ENCODE measurements at regions of chr4 and their contacts with region 1.

Region 1: DNA sequence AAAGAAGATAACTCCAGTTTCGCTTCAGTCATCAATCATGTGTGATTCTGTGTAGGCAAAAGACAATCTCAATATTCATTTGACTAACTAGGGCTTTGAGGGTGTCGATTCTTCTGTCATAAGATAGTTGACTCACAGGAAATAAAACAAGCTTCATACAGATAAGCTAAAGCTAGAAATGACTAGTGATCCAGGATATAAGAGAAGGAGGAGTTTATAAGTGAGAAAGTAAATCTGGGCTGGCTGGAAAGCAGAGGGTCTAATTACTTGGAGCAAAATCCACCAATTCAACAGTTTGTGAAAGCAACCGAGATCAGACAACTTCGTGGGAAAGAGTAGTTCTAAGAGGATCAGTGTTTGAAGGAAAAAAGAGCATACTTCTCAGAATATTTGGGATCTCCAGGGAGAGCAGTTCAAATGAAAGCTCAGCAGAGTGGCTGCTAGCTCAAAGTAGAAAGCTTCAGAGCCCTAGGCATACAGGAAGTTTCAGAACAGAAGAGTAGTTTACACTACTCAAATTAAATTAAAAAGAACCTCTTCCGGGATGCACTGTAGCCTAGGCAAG is 429.3 kb downstream of the INPP4B start:
- DNase-seq: no peak
- ATAC-seq: peak; percentile 92
- H3K4me3 Mint-ChIP-seq: peak overlapping the region; percentile 57
- H3K27ac Mint-ChIP-seq: peak overlapping the region; percentile 98
- H3K4me1 Mint-ChIP-seq: peaks cover 81% of the 10 kb centered on the region
- H3K27me3 Mint-ChIP-seq: no peaks in the 10 kb centered on the region

Region 2: DNA sequence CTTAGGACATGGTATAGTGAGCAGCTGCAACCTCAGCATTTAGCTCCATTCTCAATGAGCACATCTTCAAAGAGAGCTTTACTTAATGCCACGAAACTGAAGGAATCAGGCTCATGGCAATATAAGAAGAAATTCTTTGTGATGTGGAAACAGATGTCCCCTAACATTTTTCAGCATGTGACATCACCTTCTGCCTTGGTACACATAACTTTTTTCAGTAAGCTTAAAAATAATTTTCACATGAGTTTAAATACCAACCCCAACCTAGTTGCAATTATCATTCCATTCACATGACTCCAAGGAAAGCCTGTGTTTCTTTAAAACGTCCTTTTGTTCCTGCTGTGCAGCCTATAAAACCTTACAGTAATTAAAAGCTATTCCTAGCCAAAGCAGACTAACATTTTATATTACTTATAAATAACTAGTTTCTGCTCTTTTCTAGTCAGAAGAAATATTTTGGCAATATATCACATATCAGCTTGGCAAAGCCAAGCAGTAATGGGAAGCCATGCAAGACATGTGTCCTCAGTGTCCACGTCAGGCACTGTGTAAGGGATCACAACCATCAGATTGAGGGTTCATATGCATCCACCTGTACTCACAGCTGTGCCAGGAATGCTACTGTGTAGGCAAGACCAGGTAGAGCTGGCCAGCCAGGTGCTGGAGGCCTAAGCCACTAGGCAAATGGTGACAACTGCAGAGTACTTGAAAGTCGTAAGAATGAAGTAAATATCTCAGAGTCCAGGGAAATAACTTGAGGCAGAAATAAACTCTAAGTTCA is 37.3 kb before region 1 on chr4:
- CTCF ChIA-PET with region 1: interaction called, 4 read pairs
- POLR2A ChIA-PET with region 1: interaction called, 5 read pairs
- intact Hi-C with region 1: loop called (anchors 1 kb)
- DNase-seq: no peak
- ATAC-seq: no peak
- H3K4me3 Mint-ChIP-seq: no peak overlapping the region
- H3K27ac Mint-ChIP-seq: peak overlapping the region; percentile 93
- H3K4me1 Mint-ChIP-seq: peaks cover 83% of the 10 kb centered on the region
- H3K27me3 Mint-ChIP-seq: no peaks in the 10 kb centered on the region

Region 3: DNA sequence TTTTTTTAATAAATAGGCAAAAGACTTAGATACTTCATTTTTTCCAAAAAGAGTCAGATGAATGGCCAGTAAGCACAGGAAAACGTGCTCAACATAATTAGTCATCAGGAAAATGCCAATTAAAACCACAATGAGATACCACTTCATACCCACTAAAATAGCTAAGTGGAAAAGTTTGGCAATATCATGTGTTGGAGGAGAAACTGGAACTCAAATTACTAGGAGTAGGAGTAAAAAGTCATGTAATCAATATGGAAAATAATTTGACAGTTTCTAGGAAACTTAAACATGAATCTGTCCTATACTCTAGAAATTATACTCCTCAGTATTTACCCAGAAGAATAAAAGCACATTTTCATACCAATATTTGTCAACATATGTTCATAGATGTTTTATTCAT is 20.5 kb before region 1 on chr4:
- CTCF ChIA-PET with region 1: no interaction called
- POLR2A ChIA-PET with region 1: interaction called, 4 read pairs
- intact Hi-C with region 1: loop called in 1 of 2 experiments (anchors 1 kb)
- DNase-seq: no peak
- ATAC-seq: peak; percentile 28
- H3K4me3 Mint-ChIP-seq: peak overlapping the region; percentile 47
- H3K27ac Mint-ChIP-seq: peak overlapping the region; percentile 94
- H3K4me1 Mint-ChIP-seq: peaks cover 82% of the 10 kb centered on the region
- H3K27me3 Mint-ChIP-seq: no peaks in the 10 kb centered on the region

Region 4: GRCh38 chr4:142535009-142535408 is 118.2 kb after region 1 on chr4:
- CTCF ChIA-PET with region 1: no interaction called
- POLR2A ChIA-PET with region 1: no interaction called
- intact Hi-C with region 1: no loop called
- DNase-seq: no peak
- ATAC-seq: peak; percentile 89
- H3K4me3 Mint-ChIP-seq: no peak overlapping the region
- H3K27ac Mint-ChIP-seq: peak overlapping the region; percentile 58
- H3K4me1 Mint-ChIP-seq: peaks cover 37% of the 10 kb centered on the region
- H3K27me3 Mint-ChIP-seq: no peaks in the 10 kb centered on the region

Region 5: DNA sequence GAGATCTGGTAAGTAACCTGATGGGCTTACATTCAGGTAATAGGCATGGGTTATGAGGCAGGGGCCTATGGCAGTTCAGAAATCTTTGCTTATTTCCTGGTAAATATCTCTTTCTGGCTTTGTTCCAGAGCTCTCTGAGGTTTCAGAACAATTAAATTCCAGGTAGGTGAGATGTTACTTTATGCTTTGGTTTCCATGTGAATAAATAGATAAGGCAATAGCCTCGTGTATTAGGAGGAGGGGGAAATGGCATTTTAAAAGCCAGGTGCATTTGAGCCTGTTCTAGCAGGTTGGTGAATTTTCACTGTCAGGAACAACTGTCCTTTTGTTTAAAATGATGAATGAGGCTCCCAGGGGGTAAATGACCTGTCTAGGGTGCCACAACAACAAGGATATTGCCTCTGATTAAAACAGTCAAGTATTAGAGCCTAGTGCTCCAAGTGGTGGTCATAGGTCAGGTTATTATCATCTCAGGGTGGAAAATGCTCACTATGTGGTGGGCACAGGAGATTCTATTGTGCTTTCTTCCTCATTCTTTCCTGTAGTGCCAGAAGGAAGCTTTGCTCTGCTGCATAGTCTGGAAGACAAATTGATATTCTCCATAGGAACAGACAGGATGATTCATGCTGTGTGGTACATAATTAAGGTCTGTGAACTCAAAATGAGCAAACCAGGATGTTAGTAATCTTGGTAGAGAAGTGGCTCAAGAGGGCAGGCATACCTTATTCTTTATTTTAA is 133.1 kb after region 1 on chr4:
- CTCF ChIA-PET with region 1: interaction called, 3 read pairs
- POLR2A ChIA-PET with region 1: no interaction called
- intact Hi-C with region 1: loop called in 1 of 2 experiments (anchors 1 kb)
- DNase-seq: no peak
- ATAC-seq: peak; percentile 83
- H3K4me3 Mint-ChIP-seq: no peak overlapping the region
- H3K27ac Mint-ChIP-seq: peak overlapping the region; percentile 86
- H3K4me1 Mint-ChIP-seq: peaks cover 66% of the 10 kb centered on the region
- H3K27me3 Mint-ChIP-seq: no peaks in the 10 kb centered on the region

Region 6: GRCh38 chr4:142817442-142817841 is 400.6 kb after region 1 on chr4:
- CTCF ChIA-PET with region 1: no interaction called
- POLR2A ChIA-PET with region 1: no interaction called
- intact Hi-C with region 1: loop called in 1 of 2 experiments (anchors 5 kb)
- DNase-seq: peak; percentile 77
- ATAC-seq: peak; percentile 88
- H3K4me3 Mint-ChIP-seq: peak overlapping the region; percentile 18
- H3K27ac Mint-ChIP-seq: peak overlapping the region; percentile 82
- H3K4me1 Mint-ChIP-seq: peaks cover 32% of the 10 kb centered on the region
- H3K27me3 Mint-ChIP-seq: no peaks in the 10 kb centered on the region

Region 7: GRCh38 chr4:142824368-142824767 is 407.6 kb after region 1 on chr4:
- CTCF ChIA-PET with region 1: no interaction called
- POLR2A ChIA-PET with region 1: interaction called, 5 read pairs
- intact Hi-C with region 1: loop called (anchors 1 to 5 kb)
- DNase-seq: no peak
- ATAC-seq: peak; percentile 96
- H3K4me3 Mint-ChIP-seq: peak overlapping the region; percentile 9
- H3K27ac Mint-ChIP-seq: peak overlapping the region; percentile 63
- H3K4me1 Mint-ChIP-seq: peaks cover 18% of the 10 kb centered on the region
- H3K27me3 Mint-ChIP-seq: no peaks in the 10 kb centered on the region